Dendritic cell treated with granulocyte-macrophage colony-stimulating factor and Interleukin-4, amounts not matched to agents 40 ng/mL and 50 ng/mL, for 4 days (primary cell): ENCODE measurements at regions of chr7 and their contacts with region 1.

Region 1: GRCh38 chr7:43700059-43700501 is 29.2 kb downstream of the COA1 start:
- H3K4me3 Mint-ChIP-seq: no peak overlapping the region
- H3K27ac Mint-ChIP-seq: no peak overlapping the region
- H3K4me1 Mint-ChIP-seq: no peaks in the 10 kb centered on the region
- H3K27me3 Mint-ChIP-seq: no peaks in the 10 kb centered on the region

Region 2: DNA sequence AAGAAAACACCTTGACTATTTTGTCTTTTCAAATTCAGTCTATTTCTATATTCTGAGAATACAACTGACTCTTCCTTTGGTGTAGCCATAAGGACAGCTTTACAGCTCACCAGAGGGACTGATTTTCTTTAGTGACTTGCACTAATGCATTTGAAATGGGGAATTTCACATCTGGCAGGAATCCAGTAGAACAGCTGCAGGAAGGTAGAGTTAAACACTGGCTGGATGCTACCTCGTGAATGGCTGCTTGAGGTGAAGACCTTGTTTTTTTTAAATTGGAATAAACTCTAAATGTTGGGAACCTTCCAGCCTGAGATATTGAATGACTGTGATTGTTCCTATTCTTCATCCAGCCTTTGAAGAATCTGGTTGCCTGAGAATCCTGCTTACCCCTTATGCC is 256.7 kb before region 1 on chr7:
- intact Hi-C with region 1: no loop called
- H3K4me3 Mint-ChIP-seq: no peak overlapping the region
- H3K27ac Mint-ChIP-seq: no peak overlapping the region
- H3K4me1 Mint-ChIP-seq: no peaks in the 10 kb centered on the region
- H3K27me3 Mint-ChIP-seq: peaks cover 3% of the 10 kb centered on the region

Region 3: GRCh38 chr7:43454936-43455518 is 245.1 kb before region 1 on chr7:
- intact Hi-C with region 1: loop called (anchors 10 kb)
- H3K4me3 Mint-ChIP-seq: no peak overlapping the region
- H3K27ac Mint-ChIP-seq: no peak overlapping the region
- H3K4me1 Mint-ChIP-seq: peaks cover 13% of the 10 kb centered on the region
- H3K27me3 Mint-ChIP-seq: no peaks in the 10 kb centered on the region

Region 4: GRCh38 chr7:43582503-43583423 is 117.3 kb before region 1 on chr7 and contains the start of gene STK17A:
- intact Hi-C with region 1: loop called (anchors 1 kb)
- H3K4me3 Mint-ChIP-seq: peak within 1 kb of the TSS; percentile 94
- H3K27ac Mint-ChIP-seq: peak within 1 kb of the TSS; percentile 86
- H3K4me1 Mint-ChIP-seq: peaks cover 24% of the 10 kb centered on the region
- H3K27me3 Mint-ChIP-seq: peaks cover 21% of the 10 kb centered on the region

Region 5: DNA sequence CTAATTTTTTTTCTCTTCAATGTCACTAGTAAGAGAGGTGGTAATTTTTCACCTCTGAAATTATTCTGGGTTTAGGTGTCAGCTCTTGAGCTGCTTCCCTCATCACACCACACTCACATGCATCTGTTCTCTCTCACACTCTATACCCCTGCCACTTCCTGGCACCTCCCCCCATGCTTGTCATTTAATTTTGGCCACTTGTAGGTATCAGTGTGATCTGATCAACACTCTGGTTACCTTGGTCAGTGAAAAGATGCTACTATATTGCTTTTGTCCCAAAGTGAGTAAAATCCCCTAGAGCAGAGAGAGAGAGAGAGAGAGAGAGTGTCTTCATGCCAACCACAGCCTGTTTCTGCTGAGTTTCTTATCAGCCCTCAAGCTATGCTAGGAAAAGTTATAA is 74.6 kb before region 1 on chr7:
- intact Hi-C with region 1: no loop called
- H3K4me3 Mint-ChIP-seq: no peak overlapping the region
- H3K27ac Mint-ChIP-seq: no peak overlapping the region
- H3K4me1 Mint-ChIP-seq: no peaks in the 10 kb centered on the region
- H3K27me3 Mint-ChIP-seq: no peaks in the 10 kb centered on the region